Prostate gland (tissue), 2 donors: ENCODE measurements at regions of chrX and their contacts with region 1.

Region 1: DNA sequence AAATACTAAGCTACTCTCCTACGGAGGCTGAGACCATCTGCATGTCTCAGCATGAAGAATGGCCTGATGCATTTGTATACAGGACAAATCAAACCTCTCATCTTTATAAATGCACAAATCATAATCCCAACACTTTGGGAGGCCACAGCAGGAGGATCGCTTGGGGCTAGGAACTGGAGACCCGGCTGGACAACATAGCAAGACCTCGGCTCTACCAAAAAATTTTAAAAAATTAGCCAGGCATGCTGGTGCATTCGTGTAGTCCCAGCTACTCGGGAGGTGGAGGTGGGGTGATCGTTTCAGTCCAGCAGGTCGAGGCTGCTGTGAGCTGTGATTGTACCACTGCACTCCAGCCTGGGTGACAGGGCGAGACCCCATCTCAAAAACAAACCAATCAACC is 262.8 kb downstream of the DHRSX start:
- DNase-seq: no peak
- H3K4me3 ChIP-seq: no peak overlapping the region
- H3K27ac ChIP-seq: no peak overlapping the region
- H3K4me1 ChIP-seq: no peaks in the 10 kb centered on the region
- H3K27me3 ChIP-seq: no peaks in the 10 kb centered on the region
- CTCF ChIP-seq: no peak
- POLR2A ChIP-seq: no peak

Region 2: DNA sequence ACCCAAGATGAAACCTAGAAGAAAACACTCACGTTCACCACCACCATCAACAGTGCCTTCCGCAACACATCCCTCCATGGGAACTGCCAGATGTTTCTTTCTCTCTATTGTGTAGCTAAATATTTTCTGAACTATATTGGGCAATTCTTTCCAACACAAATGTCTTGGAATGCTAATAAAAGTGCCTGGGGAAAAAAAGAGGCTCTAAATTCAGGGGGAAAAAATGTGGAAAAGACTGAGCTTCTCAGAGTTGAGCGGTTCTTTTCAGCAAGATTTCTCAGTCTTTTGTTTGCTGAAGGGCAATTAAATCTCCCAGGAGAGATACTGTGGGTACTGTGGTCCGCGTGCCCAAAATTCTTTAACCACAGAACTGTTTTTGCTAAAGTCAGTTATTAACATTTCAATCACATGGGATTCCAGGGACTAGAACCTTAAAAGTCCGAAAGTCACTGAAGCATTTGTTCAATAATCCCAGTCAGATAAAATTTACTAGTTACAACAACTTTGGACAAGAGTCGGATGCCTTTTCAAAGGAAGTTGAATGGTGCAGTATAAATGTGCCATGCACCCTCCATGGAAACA is 314.7 kb after region 1 on chrX:
- intact Hi-C with region 1: loop called (anchors 10 kb)
- DNase-seq: no peak
- H3K4me3 ChIP-seq: no peak overlapping the region
- H3K27ac ChIP-seq: no peak overlapping the region
- H3K4me1 ChIP-seq: no peaks in the 10 kb centered on the region
- H3K27me3 ChIP-seq: no peaks in the 10 kb centered on the region
- CTCF ChIP-seq: no peak
- POLR2A ChIP-seq: no peak